ENCODE measurements at regions of chr3 and their contacts with region 1.

Region 1: GRCh38 chr3:86793786-86794185 is 197.2 kb downstream of the VGLL3 start:
- ATAC-seq: peak; percentile 70 to 99 (median 98)
- H3K4me3 ChIP-seq: no peak overlapping the region
- H3K27ac ChIP-seq: peak overlapping the region in 1 of 2 donors; percentile 46
- H3K4me1 ChIP-seq: peaks cover 0 to 12% of the 10 kb centered on the region in 2 donors

Region 2: GRCh38 chr3:86969500-86970189 is 175.9 kb after region 1 on chr3:
- in situ Hi-C with region 1: loop called in 2 of 9 experiments (anchors 25 kb)
- ATAC-seq: peak in 3 of 8 experiments; percentile 13 to 41 (median 39)
- H3K4me3 ChIP-seq: no peak overlapping the region
- H3K27ac ChIP-seq: no peak overlapping the region
- H3K4me1 ChIP-seq: no peaks in the 10 kb centered on the region

Region 3: DNA sequence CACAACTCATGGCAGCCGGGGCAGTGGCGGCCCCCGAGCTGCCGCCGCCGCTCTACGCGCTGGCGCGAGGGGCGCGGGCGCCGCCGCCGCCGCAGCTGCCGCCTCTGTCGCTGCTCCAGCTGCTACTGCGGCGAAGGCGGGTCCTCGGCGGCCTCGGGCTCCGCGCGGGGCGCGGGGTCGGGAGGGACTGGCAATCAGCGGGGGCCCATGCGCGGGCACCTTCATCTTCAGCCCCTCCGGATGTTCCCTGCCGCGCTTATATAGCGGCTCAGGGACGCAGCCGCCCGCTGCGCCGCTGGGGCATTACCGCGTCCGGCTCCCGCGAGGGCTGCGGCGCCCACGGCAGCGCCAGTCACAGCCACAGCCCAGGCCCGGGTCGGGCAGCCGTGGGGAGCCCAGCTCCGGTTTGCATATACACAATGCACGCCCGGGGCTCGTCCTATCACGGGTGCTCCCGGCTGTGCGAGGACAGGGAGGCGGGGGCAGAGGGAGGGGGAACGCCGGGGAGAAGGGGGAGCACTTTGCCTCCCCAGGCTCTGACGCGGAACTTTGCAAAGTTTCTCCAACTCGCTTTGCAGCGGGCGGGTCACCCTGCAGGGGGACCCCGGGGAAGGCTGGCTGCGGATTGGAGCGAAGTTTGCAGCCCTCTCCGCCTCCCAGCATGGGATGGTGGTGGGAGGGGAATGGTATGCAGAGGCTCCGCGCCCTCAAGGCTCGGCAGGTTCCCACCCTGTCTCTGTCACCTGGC is 197.1 kb after region 1 on chr3 and contains the start of gene VGLL3:
- in situ Hi-C with region 1: loop called in 1 of 9 experiments (anchors 25 kb)
- ATAC-seq: peak; percentile 84 to 96 (median 94)
- H3K4me3 ChIP-seq: peak within 1 kb of the TSS; percentile 51 to 80 (median 75)
- H3K27ac ChIP-seq: no peak within 1 kb of the TSS
- H3K4me1 ChIP-seq: no peaks in the 10 kb centered on the region
- total RNA-seq, gene VGLL3: 0.32 to 207 (median 14.4) TPM

Region 4: GRCh38 chr3:87082796-87083440 is 289.1 kb after region 1 on chr3:
- in situ Hi-C with region 1: loop called in 4 of 9 experiments (anchors 10 to 25 kb)
- ATAC-seq: peak in 6 of 8 experiments; percentile 44 to 96 (median 84)
- H3K4me3 ChIP-seq: no peak overlapping the region
- H3K27ac ChIP-seq: no peak overlapping the region
- H3K4me1 ChIP-seq: no peaks in the 10 kb centered on the region

Region 5: GRCh38 chr3:87167628-87168456 is 374.1 kb after region 1 on chr3:
- in situ Hi-C with region 1: loop called in 2 of 9 experiments (anchors 25 kb)
- ATAC-seq: peak in 5 of 8 experiments; percentile 44 to 87 (median 75)
- H3K4me3 ChIP-seq: peak overlapping the region in 1 of 5 donors; percentile 21
- H3K27ac ChIP-seq: no peak overlapping the region
- H3K4me1 ChIP-seq: peaks cover 0 to 8% of the 10 kb centered on the region in 2 donors

Region 6: GRCh38 chr3:87196876-87197275 is 403.1 kb after region 1 on chr3:
- in situ Hi-C with region 1: loop called in 1 of 9 experiments (anchors 25 kb)
- ATAC-seq: peak in 1 of 8 experiments; percentile 30
- H3K4me3 ChIP-seq: no peak overlapping the region
- H3K27ac ChIP-seq: no peak overlapping the region
- H3K4me1 ChIP-seq: peaks cover 0 to 12% of the 10 kb centered on the region in 2 donors